ENCODE measurements at regions of chr12 and their contacts with region 1.

Region 1: GRCh38 chr12:107685360-107686248 is at the start of gene PWP1:
- DNase-seq: peak; percentile 95 to 97
- ATAC-seq: peak; percentile 97 to 98 (median 97)
- H3K4me3 ChIP-seq: peak within 1 kb of the TSS; percentile 99
- H3K27ac ChIP-seq: peak within 1 kb of the TSS; percentile 92
- H3K4me1 ChIP-seq: peaks cover 12% of the 10 kb centered on the region
- H3K27me3 ChIP-seq: no peaks in the 10 kb centered on the region
- CTCF ChIP-seq: no peak
- total RNA-seq, gene PWP1: 15.6 to 20.5 (median 19.5) TPM

Region 2: GRCh38 chr12:107635139-107635538 is 50.5 kb before region 1 on chr12:
- intact Hi-C with region 1: no loop called
- DNase-seq: no peak
- ATAC-seq: no peak
- H3K4me3 ChIP-seq: no peak overlapping the region
- H3K27ac ChIP-seq: no peak overlapping the region
- H3K4me1 ChIP-seq: no peaks in the 10 kb centered on the region
- H3K27me3 ChIP-seq: peaks cover 0 to 2% (median 0%) of the 10 kb centered on the region in 3 donors
- CTCF ChIP-seq: no peak

Region 3: DNA sequence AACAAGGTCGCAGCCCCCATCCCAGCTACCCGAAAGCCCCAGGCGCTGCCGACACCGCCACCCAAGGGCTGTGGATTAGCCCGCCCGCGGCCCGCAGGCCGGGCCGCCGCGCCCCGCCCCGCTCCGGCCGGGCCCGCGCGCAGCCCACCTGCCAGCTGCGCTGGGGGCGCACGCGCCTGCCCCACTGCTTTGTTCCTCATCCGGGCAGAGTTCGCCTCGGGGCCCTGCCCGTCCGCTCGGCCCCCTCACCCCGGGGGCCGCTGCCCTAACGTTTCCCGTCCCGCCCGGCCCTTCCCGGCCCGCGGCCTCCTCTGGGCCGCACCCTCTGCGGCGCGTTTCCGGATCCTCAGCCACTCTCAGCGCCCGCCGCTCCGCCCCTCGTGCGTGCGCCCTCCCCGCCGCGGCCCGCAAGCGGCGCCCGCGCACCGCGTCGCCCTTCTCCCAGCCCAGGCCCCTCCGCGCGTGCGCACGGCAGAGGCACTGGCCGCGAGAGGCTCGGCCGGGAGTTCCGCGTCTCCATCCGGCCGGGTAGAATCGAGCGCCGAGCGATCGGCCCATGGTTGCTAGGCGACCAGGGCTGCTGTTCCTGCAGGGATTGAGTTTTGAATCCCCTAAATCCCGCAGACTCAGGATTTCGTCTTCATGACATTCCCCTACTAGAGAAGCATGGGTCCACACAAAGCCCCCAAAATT is 75.4 kb after region 1 on chr12 and contains the start of gene PRDM4:
- intact Hi-C with region 1: loop called (anchors 5 kb)
- DNase-seq: peak; percentile 96 to 97
- ATAC-seq: peak; percentile 100
- H3K4me3 ChIP-seq: peak within 1 kb of the TSS; percentile 81
- H3K27ac ChIP-seq: peak within 1 kb of the TSS; percentile 77
- H3K4me1 ChIP-seq: peaks cover 22% of the 10 kb centered on the region
- H3K27me3 ChIP-seq: no peaks in the 10 kb centered on the region
- CTCF ChIP-seq: peak; percentile 36
- total RNA-seq, gene PRDM4: 11.3 to 15.7 (median 13.2) TPM